ENCODE measurements at regions of chr5 and their contacts with region 1.

Region 1: GRCh38 chr5:472656-473553 is 29.9 kb downstream of the EXOC3 start:
- DNase-seq: peak; percentile 87 to 90 (median 88)
- ATAC-seq: peak; percentile 92
- H3K4me3 ChIP-seq: peak overlapping the region; percentile 53 to 54
- H3K27ac ChIP-seq: peak overlapping the region; percentile 28 to 86 (median 79)
- H3K4me1 ChIP-seq: peaks cover 38% of the 10 kb centered on the region
- H3K27me3 ChIP-seq: peaks cover 0 to 18% of the 10 kb centered on the region in 2 donors
- CTCF ChIP-seq: peak in 2 of 7 experiments; percentile 5 to 6
- POLR2A ChIP-seq: peak; percentile 39 to 58 (median 47)

Region 2: DNA sequence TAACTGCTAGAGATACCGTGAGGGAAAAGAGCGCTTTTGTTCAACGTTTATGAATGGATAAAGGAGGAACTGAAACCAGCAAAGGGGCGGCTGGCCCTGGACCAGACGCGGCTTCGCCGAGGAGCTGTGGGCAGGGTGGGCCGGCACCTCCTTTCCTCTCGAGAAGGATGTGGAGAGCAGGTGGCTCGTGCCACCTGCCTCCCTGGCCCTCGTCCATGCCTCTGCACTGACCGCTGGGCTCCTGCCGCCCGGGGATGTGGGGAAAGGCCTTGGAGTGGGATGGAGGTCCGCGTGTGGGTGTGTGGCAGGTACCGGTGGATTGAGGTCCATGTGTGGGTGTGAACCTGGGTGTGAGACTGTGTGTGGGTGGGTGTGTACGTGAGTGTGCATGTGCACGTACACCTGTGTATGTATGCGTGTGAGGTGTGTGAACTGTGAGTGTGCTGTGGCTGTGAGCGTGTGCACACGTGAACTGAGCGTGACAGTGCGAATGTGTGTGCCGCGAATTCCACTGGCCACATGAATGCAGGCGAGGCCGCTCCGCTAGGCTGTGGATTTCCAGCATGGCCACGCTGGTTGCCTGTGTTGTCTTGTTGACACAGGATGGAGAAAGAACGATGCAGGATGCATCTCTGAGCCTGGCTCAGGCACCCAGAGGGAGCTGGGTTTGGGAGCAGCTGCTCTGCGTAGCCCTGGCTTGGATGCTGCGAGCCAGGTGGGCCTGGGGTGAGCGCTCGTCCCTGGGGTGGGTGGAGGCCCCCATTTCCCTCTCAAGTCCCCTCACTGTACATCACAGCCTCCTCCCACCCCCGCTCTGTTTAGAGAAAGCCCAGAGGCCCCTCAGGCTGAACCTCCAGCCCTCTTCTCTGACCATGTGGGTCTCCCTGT is 134.9 kb after region 1 on chr5:
- intact Hi-C with region 1: loop called (anchors 10 kb)
- DNase-seq: peak in 2 of 4 donors; percentile 16 to 17
- ATAC-seq: no peak
- H3K4me3 ChIP-seq: no peak overlapping the region
- H3K27ac ChIP-seq: no peak overlapping the region
- H3K4me1 ChIP-seq: peaks cover 9% of the 10 kb centered on the region
- H3K27me3 ChIP-seq: no peaks in the 10 kb centered on the region
- CTCF ChIP-seq: no peak
- POLR2A ChIP-seq: no peak

Measured in body of pancreas (tissue), 4 donors.